GM10248 (cell line): ENCODE measurements at regions of chrX and their contacts with region 1.

Region 1: DNA sequence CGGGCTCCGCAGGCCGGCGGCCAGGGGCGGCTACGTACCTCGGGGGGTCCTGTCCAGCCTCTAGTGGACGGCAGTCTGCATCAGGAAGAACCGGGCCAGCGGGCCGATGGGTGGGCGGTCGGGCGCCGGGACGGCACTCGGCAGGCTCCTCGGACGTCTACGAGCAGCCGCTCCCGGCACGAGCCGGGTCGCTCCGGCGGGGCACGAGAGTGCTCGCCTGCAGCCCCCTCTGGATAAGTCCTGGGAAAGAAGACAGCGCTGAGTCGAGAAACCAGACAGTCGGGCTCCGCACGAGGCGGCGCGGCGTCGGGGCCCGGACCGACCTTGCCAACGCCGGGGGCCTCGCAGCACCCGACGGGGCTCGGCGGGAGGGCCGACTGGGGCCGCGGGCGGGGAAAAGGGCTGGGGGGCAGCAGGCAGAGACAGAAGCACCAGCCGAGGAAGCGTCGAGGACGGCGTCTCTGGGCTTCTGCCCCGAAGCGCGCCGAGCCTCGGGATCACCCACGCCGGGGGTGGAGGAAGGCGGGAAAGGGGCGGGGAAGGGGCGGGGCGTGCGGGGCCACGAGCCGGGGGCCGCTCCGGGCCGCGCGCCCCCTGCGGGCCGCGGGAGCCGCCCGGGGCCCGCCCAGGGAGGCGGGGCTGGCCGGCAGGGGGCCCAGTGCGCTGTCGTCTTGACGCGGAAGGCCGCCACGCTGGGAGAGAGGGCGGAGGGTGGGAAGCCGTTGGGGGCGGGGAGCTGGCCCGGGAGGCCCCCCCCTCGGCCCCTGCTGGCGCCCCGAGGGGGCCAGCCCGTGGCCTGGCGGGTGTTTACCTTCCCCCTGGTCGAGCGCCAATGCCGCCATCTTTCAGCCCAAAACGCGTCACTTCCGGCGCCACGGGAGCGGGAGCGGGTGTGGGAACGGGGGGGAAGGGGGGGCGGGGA is 1.9 kb downstream of the KLHL15 start:
- DNase-seq: peak; percentile 88
- CTCF ChIP-seq: peak; percentile 41

Region 2: DNA sequence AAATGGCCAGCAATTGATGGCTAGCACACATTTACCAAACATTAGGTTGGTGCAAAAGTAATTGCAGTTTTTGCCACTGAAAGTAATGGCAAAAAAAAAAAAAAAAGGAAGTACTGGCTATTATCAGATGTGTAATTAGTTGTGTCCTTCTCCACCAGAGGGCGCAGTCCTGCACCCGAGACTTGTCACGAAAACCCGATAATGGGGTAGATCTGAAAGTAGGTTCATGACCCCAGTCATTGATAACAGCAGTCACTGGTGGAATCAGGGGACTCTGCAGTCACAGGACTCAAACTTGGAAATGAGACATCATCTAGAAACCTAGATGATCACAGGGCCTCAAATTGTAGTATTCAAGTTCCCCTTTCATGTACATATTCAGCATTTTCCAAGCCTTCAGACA is 268.9 kb before region 1 on chrX:
- CTCF ChIA-PET with region 1: no interaction called
- POLR2A ChIA-PET with region 1: no interaction called
- DNase-seq: peak; percentile 65
- CTCF ChIP-seq: peak; percentile 42

Region 3: GRCh38 chrX:24054182-24055042 is 29.3 kb after region 1 on chrX and contains the start of gene EIF2S3:
- CTCF ChIA-PET with region 1: interaction called, 16 read pairs
- POLR2A ChIA-PET with region 1: interaction called, 16 read pairs
- DNase-seq: peak; percentile 89
- CTCF ChIP-seq: peak; percentile 10